ENCODE measurements at regions of chr1 and their contacts with region 1.

Region 1: DNA sequence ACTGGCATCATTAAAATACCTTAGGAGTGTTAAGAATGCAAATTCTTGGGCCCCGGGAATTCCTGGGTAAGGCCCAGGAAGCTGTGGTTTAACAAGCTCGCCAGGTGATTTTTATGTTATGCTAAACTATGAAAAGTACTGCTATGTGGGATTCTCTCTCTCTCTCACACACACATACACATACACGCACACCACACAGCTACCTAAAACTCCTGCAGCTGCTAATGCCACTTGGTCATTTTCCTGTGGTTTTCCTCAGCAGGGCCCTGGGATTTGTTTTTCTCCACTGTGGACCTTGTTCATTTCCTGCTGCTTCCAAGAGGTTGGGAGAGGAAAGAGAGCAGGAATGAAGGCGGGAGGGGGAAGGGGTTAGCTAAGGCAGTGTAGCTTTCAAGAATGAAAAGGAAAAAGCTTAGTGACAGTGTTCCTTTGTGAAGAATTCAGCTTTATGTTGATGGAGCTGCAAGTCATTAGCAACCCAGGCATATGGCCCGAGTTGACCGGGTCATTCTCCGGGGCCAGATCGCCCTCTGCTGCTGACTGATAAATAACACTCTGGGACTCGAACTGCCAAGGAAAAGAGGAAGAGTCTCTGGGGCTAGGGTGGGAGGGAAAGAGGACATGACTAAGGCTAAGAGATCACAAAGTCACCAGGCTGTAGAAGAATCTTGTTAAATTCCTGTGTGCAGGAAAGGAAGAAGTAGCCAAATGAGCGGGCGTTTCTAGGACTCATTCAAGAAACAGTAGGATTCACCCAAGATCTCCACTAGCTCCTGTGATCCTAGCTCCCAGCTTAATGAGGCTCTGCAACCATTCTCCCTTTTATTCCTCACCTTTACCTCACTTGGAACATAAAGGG is 30.5 kb upstream of the LRIG2 start:
- DNase-seq: peak in 3 of 4 donors; percentile 52 to 79 (median 76)
- ATAC-seq: peak; percentile 98
- H3K4me3 ChIP-seq: no peak overlapping the region
- H3K27ac ChIP-seq: peak overlapping the region in 1 of 2 donors; percentile 33
- H3K4me1 ChIP-seq: peaks cover 10 to 26% of the 10 kb centered on the region in 2 donors
- H3K27me3 ChIP-seq: no peaks in the 10 kb centered on the region
- CTCF ChIP-seq: peak; percentile 32 to 52

Region 2: GRCh38 chr1:112881742-112882127 is 160.8 kb before region 1 on chr1:
- intact Hi-C with region 1: loop called in 1 of 2 experiments (anchors 2 kb)
- DNase-seq: no peak
- ATAC-seq: peak; percentile 58
- H3K4me3 ChIP-seq: no peak overlapping the region
- H3K27ac ChIP-seq: no peak overlapping the region
- H3K4me1 ChIP-seq: peaks cover 0 to 6% of the 10 kb centered on the region in 2 donors
- H3K27me3 ChIP-seq: peaks cover 0 to 11% of the 10 kb centered on the region in 2 donors
- CTCF ChIP-seq: no peak

Region 3: DNA sequence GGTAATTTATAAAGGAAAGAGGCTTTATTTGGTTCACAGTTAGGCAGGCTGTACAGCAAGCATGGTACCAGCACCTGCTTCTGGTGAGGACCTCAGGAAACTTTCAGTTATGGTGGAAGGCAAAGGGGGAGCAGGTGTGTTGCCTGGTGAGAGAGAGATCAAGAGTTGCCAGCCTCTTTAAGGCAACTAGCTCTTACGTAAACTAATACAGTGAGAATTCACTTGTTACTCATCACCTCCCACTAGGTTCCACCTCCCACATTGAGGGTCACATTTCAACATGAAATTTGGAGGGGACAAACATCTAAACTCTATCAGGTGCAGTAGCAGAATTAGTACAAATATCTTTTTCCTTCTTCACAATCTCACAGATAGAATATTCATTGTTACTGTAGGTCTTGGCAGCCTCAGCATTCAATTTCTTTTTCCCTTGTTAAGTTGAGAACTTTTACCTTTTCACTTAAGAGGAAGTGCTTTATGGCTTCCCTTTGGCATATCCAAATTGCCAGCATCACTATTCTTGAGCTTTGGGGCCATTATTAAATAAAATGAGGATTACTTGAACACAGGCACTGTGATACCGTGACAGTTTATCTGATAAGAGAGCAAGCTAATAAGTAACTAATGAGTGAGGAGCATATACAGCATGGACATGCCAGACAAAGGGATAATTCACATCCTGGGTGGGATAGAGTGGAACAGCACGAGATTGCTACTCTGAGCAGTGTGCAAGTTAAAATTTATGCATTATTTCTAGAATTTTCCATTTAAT is 396.2 kb after region 1 on chr1:
- intact Hi-C with region 1: no loop called
- DNase-seq: no peak
- ATAC-seq: peak; percentile 17
- H3K4me3 ChIP-seq: no peak overlapping the region
- H3K27ac ChIP-seq: no peak overlapping the region
- H3K4me1 ChIP-seq: peaks cover 0 to 14% of the 10 kb centered on the region in 2 donors
- H3K27me3 ChIP-seq: no peaks in the 10 kb centered on the region
- CTCF ChIP-seq: no peak